Activated CD8-positive, alpha-beta T cell treated with anti-CD3 and anti-CD28 coated beads for 36 hours (primary cell): ENCODE measurements at regions of chr2 and their contacts with region 1.

Region 1: GRCh38 chr2:197464175-197464574 is 10.8 kb downstream of the COQ10B start:
- DNase-seq: no peak
- ATAC-seq: no peak
- H3K4me3 Mint-ChIP-seq: no peak overlapping the region
- H3K27ac Mint-ChIP-seq: peak overlapping the region; percentile 16
- H3K4me1 Mint-ChIP-seq: peaks cover 10% of the 10 kb centered on the region
- H3K27me3 Mint-ChIP-seq: no peaks in the 10 kb centered on the region
- CTCF ChIP-seq: no peak

Region 2: GRCh38 chr2:197255543-197255942 is 208.6 kb before region 1 on chr2:
- CTCF ChIA-PET with region 1: no interaction called
- POLR2A ChIA-PET with region 1: no interaction called
- intact Hi-C with region 1: no loop called
- DNase-seq: peak; percentile 94
- ATAC-seq: peak; percentile 91
- H3K4me3 Mint-ChIP-seq: peak overlapping the region; percentile 76
- H3K27ac Mint-ChIP-seq: peak overlapping the region; percentile 92
- H3K4me1 Mint-ChIP-seq: peaks cover 78% of the 10 kb centered on the region
- H3K27me3 Mint-ChIP-seq: no peaks in the 10 kb centered on the region
- CTCF ChIP-seq: no peak

Region 3: DNA sequence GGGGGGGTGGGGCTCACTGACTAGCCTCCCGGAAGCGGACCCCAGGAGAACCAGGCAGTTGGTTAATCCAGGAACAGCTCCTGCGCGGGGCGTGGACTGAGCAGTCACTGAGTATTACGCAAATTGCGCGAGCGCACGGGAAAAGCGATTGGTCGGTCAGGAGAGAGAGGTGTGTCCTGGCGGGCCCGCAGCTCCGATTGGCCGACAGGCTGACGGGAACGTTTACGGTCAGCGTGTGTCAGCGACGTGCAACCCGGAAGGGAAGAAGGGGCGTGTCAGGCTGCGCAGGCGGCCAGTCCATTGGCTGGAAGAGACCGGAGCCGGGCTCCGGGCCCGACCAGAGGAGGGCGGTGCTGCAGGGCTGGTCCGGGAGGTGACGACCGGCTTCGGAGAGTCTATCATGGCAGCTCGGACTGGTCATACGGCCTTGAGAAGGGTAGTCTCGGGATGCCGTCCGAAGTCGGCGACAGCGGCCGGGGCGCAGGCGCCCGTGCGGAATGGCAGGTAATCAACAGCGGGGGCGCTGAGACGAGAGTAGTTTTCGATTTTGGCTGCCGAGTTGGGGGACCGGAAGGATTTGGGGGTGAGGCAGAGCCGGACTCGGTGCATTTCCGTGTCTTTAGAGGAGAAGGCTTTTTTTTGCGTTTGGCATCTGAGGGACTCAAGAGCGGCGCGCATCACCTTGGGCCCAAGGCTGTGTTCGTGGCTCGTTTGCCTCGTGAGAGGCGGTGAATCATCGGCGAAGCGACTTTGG is 10.8 kb before region 1 on chr2 and contains the start of gene COQ10B:
- CTCF ChIA-PET with region 1: interaction called, 8 read pairs
- POLR2A ChIA-PET with region 1: interaction called, 12 read pairs
- intact Hi-C with region 1: no loop called
- DNase-seq: peak; percentile 99
- ATAC-seq: peak; percentile 92
- H3K4me3 Mint-ChIP-seq: peak within 1 kb of the TSS; percentile 92
- H3K27ac Mint-ChIP-seq: peak within 1 kb of the TSS; percentile 99
- H3K4me1 Mint-ChIP-seq: peaks cover 43% of the 10 kb centered on the region
- H3K27me3 Mint-ChIP-seq: no peaks in the 10 kb centered on the region
- CTCF ChIP-seq: no peak
- total RNA-seq, gene COQ10B: 14.0 to 14.6 TPM

Region 4: DNA sequence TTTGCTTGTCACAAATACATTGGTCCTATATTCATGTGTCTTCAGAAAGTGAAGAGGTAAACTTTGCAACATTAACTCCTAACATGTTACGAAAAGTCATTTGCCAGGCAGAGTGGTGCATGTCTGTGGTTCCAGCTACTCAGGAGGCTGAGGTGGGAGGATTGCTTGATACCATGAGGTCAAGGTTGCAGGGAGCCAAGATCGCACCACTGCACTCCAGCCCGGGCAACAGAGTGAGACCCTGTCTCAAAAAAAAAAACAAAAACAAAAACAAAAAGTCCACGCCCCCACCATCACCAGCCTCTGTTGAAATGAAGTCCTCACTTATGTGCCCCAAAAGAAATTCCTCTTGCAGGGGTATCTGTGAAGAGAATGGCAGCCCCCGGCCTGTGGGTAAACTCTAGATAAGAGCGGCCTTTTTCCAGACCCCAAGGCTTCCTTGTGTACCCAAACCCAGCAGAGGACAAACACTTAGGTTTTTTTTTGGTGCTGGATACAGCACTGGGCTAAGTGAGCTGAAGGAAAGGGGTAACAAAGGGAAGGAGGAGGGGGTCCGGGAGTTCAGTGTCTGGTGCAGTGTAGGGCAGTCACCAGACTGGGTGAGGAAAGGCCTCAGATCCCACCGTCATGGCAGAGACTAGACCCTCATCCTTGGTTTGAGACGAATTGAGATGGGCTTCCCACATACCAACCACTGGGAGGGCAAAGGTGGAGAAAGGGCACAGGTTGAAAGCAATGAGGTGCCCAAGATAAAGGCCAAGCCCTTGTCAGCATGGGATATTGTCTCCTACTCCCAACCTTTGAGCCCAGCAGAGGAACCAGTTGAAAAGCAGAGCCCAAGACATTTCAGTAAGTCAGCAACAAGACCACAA is 16.2 kb after region 1 on chr2:
- CTCF ChIA-PET with region 1: no interaction called
- POLR2A ChIA-PET with region 1: interaction called, 11 read pairs
- intact Hi-C with region 1: no loop called
- DNase-seq: no peak
- ATAC-seq: no peak
- H3K4me3 Mint-ChIP-seq: no peak overlapping the region
- H3K27ac Mint-ChIP-seq: no peak overlapping the region
- H3K4me1 Mint-ChIP-seq: no peaks in the 10 kb centered on the region
- H3K27me3 Mint-ChIP-seq: no peaks in the 10 kb centered on the region
- CTCF ChIP-seq: no peak